GM12878 (cell line): ENCODE measurements at regions of chr12 and their contacts with region 1.

Region 1: DNA sequence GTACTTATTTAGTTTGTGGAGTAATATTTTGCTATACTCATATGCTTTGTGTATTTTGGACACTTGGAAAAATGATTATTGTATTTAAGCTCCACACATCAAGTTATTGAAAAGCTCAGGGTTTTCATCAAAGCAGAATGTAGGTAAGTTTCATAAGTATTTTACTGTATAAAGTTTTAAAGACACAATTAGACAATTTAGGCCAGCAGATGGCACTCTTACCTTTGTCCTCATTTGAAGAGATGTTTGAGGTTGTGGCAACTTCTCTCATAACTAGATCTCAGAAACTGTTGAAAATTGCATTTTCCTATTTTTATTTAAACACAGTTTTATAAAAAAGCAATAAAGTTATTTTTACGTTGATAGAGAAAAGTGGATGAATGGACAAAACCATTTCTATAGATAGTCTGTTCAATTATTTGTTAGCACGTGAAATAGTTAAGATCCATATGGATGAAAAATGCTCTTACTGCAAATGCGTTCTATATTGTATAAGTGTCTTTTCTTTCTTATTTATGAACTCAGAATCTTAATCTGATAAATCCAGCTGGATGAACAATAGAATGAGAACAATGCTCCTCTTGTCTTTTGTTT is 300.0 kb downstream of the AEBP2 start:
- DNase-seq: peak; percentile 16
- ATAC-seq: peak; percentile 70
- H3K4me3 ChIP-seq: no peak overlapping the region
- H3K27ac ChIP-seq: no peak overlapping the region
- H3K4me1 ChIP-seq: no peaks in the 10 kb centered on the region
- H3K27me3 ChIP-seq: no peaks in the 10 kb centered on the region
- CTCF ChIP-seq: peak; percentile 47 to 62 (median 53)
- EP300 ChIP-seq: no peak
- POLR2A ChIP-seq: no peak
- RAD21 ChIP-seq: peak; percentile 75

Region 2: DNA sequence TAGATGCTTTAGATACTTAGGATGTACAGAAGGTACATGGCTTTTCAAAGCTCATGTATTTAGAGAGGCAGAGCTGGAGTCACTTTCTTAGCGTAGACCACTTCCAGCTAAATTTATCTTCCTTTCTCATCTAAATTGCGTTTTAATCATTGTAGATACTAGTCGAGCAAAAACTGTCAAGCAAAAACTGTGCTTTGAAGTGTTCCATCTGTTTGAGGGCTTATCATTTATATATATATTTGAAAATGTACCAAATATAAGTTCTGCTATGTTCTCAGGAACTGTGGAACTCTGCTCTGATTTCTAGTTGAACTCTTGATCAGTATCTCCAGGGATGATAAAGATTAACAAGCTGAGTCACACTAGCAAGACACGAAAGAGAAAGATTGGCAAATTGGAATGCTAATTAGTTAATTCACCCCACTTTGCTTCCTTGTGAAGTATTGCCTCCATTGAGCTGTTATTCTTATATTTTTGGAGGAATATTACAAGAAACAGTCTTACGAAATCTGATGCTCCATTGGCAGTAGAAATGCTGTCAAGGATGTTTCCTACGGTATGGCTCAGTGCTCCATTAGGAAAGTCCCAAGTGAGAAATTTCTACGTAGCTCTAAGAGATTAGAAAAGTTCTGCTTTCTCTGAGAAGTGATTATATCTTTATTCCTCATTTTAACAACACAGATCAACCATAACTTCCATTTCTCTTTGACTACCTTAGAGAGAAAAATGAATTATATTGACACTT is 10.8 kb after region 1 on chr12:
- CTCF ChIA-PET with region 1: interaction called, 8 read pairs
- POLR2A ChIA-PET with region 1: no interaction called
- RAD21 ChIA-PET with region 1: interaction called, 4 read pairs
- SMC1A ChIA-PET with region 1: interaction called, 16 read pairs
- in situ Hi-C with region 1: no loop called
- intact Hi-C with region 1: no loop called
- DNase-seq: no peak
- ATAC-seq: no peak
- H3K4me3 ChIP-seq: no peak overlapping the region
- H3K27ac ChIP-seq: no peak overlapping the region
- H3K4me1 ChIP-seq: no peaks in the 10 kb centered on the region
- H3K27me3 ChIP-seq: no peaks in the 10 kb centered on the region
- CTCF ChIP-seq: no peak
- EP300 ChIP-seq: no peak
- POLR2A ChIP-seq: no peak
- RAD21 ChIP-seq: no peak

Region 3: GRCh38 chr12:20220339-20220738 is 481.1 kb after region 1 on chr12:
- CTCF ChIA-PET with region 1: interaction called, 22 read pairs
- POLR2A ChIA-PET with region 1: no interaction called
- RAD21 ChIA-PET with region 1: interaction called, 11 read pairs
- SMC1A ChIA-PET with region 1: interaction called, 18 read pairs
- in situ Hi-C with region 1: no loop called
- intact Hi-C with region 1: loop called (anchors 5 kb)
- DNase-seq: peak; percentile 5
- ATAC-seq: peak; percentile 87
- H3K4me3 ChIP-seq: no peak overlapping the region
- H3K27ac ChIP-seq: no peak overlapping the region
- H3K4me1 ChIP-seq: no peaks in the 10 kb centered on the region
- H3K27me3 ChIP-seq: no peaks in the 10 kb centered on the region
- CTCF ChIP-seq: peak; percentile 15 to 44 (median 35); a peak in 4 of 6 replicates
- EP300 ChIP-seq: no peak
- POLR2A ChIP-seq: no peak
- RAD21 ChIP-seq: peak; percentile 61

Region 4: GRCh38 chr12:20376984-20377383 is 637.7 kb after region 1 on chr12:
- CTCF ChIA-PET with region 1: interaction called, 7 read pairs
- POLR2A ChIA-PET with region 1: no interaction called
- RAD21 ChIA-PET with region 1: interaction called, 3 read pairs
- SMC1A ChIA-PET with region 1: interaction called, 3 read pairs
- in situ Hi-C with region 1: no loop called
- intact Hi-C with region 1: loop called (anchors 1 kb)
- DNase-seq: no peak
- ATAC-seq: peak; percentile 44
- H3K4me3 ChIP-seq: no peak overlapping the region
- H3K27ac ChIP-seq: no peak overlapping the region
- H3K4me1 ChIP-seq: no peaks in the 10 kb centered on the region
- H3K27me3 ChIP-seq: no peaks in the 10 kb centered on the region
- CTCF ChIP-seq: peak in 1 of 3 experiments; percentile 36; a peak in 1 of 6 replicates
- EP300 ChIP-seq: no peak
- POLR2A ChIP-seq: no peak
- RAD21 ChIP-seq: peak; percentile 60

Region 5: GRCh38 chr12:20588042-20588441 is 848.8 kb after region 1 on chr12:
- CTCF ChIA-PET with region 1: no interaction called
- POLR2A ChIA-PET with region 1: no interaction called
- RAD21 ChIA-PET with region 1: no interaction called
- SMC1A ChIA-PET with region 1: no interaction called
- in situ Hi-C with region 1: loop called (anchors 25 kb)
- intact Hi-C with region 1: no loop called
- DNase-seq: no peak
- ATAC-seq: no peak
- H3K4me3 ChIP-seq: no peak overlapping the region
- H3K27ac ChIP-seq: no peak overlapping the region
- H3K4me1 ChIP-seq: no peaks in the 10 kb centered on the region
- H3K27me3 ChIP-seq: no peaks in the 10 kb centered on the region
- CTCF ChIP-seq: no peak
- EP300 ChIP-seq: no peak
- POLR2A ChIP-seq: no peak
- RAD21 ChIP-seq: no peak